MCF 10A (cell line): ENCODE measurements at regions of chr1 and their contacts with region 1.

Region 1: DNA sequence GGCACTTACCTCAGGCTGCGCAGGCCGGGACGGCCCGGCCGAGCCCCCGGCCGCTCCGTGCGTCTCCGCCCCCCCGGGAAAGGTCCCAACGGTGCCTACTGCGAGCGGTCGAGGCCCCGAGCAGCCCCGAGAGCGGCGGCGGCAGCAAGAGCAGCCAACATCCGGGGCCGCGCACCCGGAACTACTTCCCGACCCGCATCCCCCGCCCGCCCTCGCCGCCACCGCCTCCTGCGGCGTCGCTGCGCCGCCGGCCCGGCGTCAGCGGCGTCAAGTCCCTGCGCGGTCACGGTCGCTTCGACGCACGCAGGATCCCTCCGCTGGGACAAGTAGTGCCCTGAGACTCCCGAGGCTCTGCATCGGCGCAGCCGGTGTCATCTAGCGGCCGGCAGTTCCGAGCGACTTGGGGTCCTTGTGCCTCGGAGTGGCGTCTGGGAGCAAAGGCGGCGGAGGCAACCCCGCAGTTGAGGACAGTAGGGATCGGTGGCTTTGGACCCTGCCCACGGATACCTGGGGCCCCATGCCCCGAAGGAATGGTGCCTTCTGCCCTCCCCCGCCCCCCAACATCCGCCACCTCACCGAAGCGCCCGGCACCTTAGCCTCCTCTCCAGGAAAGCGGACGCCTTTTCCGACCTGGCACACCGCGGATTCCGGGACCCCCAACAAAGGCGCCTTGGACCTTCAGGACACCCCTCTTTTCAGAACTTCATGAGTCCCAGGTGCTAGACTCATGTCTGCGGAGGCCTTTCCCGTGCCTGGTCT is at the start of gene FOXJ3:
- DNase-seq: peak; percentile 92
- H3K4me3 Mint-ChIP-seq: peak within 1 kb of the TSS; percentile 79
- H3K27ac Mint-ChIP-seq: peak within 1 kb of the TSS; percentile 92
- H3K4me1 Mint-ChIP-seq: peaks cover 46% of the 10 kb centered on the region
- H3K27me3 Mint-ChIP-seq: no peaks in the 10 kb centered on the region
- CTCF ChIP-seq: no peak
- total RNA-seq, gene FOXJ3: 42.2 and 43.7 TPM in 2 replicates

Region 2: DNA sequence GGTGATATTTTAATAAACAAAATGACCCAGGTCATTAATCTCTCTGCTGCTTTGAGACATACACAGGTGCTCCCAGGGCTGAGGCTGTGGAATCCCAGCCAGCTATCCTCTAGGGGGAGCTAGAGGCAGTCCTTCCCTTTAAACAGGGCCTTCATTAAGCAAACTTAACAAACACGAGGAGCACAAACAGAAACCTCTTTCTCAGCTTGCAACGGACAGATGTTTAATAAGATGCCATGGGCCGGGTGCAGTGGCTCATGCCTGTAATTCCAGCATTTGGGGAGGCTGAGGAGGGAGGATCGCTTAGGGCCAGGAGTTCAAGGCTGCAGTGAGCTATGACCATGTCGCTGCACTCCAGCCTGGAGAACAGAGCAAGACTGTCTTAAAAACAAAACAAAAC is 523.2 kb before region 1 on chr1:
- CTCF ChIA-PET with region 1: no interaction called
- POLR2A ChIA-PET with region 1: no interaction called
- intact Hi-C with region 1: loop called (anchors 5 kb)
- DNase-seq: peak; percentile 79
- H3K4me3 Mint-ChIP-seq: no peak overlapping the region
- H3K27ac Mint-ChIP-seq: no peak overlapping the region
- H3K4me1 Mint-ChIP-seq: peaks cover 7% of the 10 kb centered on the region
- H3K27me3 Mint-ChIP-seq: no peaks in the 10 kb centered on the region
- CTCF ChIP-seq: peak; percentile 59

Region 3: DNA sequence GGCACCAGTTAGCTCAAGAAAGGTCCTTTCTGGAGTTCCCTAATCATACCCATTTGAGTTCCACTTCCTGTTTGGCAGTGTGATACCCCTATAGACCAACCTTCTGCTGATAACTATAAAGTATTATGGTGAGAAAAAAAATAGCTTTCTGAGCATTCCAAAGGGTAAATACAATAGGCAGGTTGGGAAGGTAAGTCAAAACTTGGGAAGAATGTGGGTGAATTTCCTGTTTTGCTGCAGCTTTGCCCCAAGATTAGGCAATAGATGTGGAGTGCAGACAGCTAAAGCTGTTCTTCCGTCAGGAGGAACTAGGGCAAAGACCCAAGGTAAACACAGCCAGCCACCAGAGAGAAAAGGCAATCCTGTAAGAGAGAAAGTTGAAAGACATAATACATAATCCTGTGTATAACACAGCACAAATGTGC is 120.8 kb before region 1 on chr1:
- CTCF ChIA-PET with region 1: interaction called, 7 read pairs
- POLR2A ChIA-PET with region 1: interaction called, 13 read pairs
- intact Hi-C with region 1: no loop called
- DNase-seq: peak; percentile 90
- H3K4me3 Mint-ChIP-seq: peak overlapping the region; percentile 28
- H3K27ac Mint-ChIP-seq: peak overlapping the region; percentile 20
- H3K4me1 Mint-ChIP-seq: peaks cover 33% of the 10 kb centered on the region
- H3K27me3 Mint-ChIP-seq: no peaks in the 10 kb centered on the region
- CTCF ChIP-seq: no peak

Region 4: GRCh38 chr1:42319128-42319851 is 15.9 kb before region 1 on chr1:
- CTCF ChIA-PET with region 1: interaction called, 6 read pairs
- POLR2A ChIA-PET with region 1: interaction called, 14 read pairs
- intact Hi-C with region 1: no loop called
- DNase-seq: peak; percentile 11
- H3K4me3 Mint-ChIP-seq: peak overlapping the region; percentile 3
- H3K27ac Mint-ChIP-seq: peak overlapping the region; percentile 63
- H3K4me1 Mint-ChIP-seq: peaks cover 65% of the 10 kb centered on the region
- H3K27me3 Mint-ChIP-seq: no peaks in the 10 kb centered on the region
- CTCF ChIP-seq: no peak

Region 5: GRCh38 chr1:42462828-42463763 is 127.9 kb after region 1 on chr1 and contains the start of gene CCDC30:
- CTCF ChIA-PET with region 1: no interaction called
- POLR2A ChIA-PET with region 1: interaction called, 8 read pairs
- intact Hi-C with region 1: loop called (anchors 2 kb)
- DNase-seq: peak; percentile 99
- H3K4me3 Mint-ChIP-seq: peak within 1 kb of the TSS; percentile 81
- H3K27ac Mint-ChIP-seq: peak within 1 kb of the TSS; percentile 89
- H3K4me1 Mint-ChIP-seq: peaks cover 11% of the 10 kb centered on the region
- H3K27me3 Mint-ChIP-seq: no peaks in the 10 kb centered on the region
- CTCF ChIP-seq: no peak
- total RNA-seq, gene CCDC30: 2.2 and 3.2 TPM in 2 replicates

Region 6: DNA sequence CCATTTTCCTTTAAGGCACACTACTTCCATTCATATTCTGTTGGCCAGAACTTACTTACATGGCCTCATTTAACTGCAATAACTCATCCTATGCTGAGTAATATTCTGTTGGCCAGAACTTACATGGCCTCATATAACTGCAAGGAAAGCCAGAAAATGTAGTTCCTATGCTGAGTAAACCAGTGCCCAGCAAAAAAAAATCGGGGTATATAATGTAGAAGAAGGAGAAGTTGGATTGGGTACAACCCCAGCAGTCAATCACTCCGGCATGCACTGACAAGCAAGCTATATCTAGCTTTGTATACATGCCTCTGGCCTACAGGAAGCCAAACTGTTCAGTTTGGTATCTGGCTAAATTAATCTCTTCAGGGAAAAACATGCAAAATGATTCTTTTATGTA is 283.6 kb after region 1 on chr1:
- CTCF ChIA-PET with region 1: no interaction called
- POLR2A ChIA-PET with region 1: no interaction called
- intact Hi-C with region 1: no loop called
- DNase-seq: no peak
- H3K4me3 Mint-ChIP-seq: no peak overlapping the region
- H3K27ac Mint-ChIP-seq: no peak overlapping the region
- H3K4me1 Mint-ChIP-seq: no peaks in the 10 kb centered on the region
- H3K27me3 Mint-ChIP-seq: peaks cover 7% of the 10 kb centered on the region
- CTCF ChIP-seq: no peak

Region 7: DNA sequence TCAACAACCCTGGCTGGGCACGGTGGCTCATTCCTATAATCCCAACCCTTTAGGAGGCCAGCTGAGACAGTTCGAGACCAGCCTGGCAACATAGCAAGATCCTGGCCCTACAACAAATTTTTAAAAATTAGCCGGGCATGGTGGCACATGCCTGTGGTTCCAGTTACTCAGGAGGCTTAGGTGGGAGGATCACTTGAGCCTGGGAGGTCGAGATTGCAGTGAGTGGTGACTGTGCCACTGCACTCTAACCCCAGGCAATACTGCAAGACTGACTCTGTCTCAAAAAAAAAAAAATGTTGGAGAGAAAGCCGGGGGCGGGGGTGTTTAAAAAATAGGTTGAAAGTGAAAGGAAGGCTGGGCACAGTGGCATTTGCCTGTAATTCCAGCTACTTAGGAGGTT is 388.3 kb after region 1 on chr1:
- CTCF ChIA-PET with region 1: no interaction called
- POLR2A ChIA-PET with region 1: no interaction called
- intact Hi-C with region 1: loop called (anchors 10 kb)
- DNase-seq: peak; percentile 21
- H3K4me3 Mint-ChIP-seq: no peak overlapping the region
- H3K27ac Mint-ChIP-seq: no peak overlapping the region
- H3K4me1 Mint-ChIP-seq: peaks cover 9% of the 10 kb centered on the region
- H3K27me3 Mint-ChIP-seq: no peaks in the 10 kb centered on the region
- CTCF ChIP-seq: no peak

Region 8: DNA sequence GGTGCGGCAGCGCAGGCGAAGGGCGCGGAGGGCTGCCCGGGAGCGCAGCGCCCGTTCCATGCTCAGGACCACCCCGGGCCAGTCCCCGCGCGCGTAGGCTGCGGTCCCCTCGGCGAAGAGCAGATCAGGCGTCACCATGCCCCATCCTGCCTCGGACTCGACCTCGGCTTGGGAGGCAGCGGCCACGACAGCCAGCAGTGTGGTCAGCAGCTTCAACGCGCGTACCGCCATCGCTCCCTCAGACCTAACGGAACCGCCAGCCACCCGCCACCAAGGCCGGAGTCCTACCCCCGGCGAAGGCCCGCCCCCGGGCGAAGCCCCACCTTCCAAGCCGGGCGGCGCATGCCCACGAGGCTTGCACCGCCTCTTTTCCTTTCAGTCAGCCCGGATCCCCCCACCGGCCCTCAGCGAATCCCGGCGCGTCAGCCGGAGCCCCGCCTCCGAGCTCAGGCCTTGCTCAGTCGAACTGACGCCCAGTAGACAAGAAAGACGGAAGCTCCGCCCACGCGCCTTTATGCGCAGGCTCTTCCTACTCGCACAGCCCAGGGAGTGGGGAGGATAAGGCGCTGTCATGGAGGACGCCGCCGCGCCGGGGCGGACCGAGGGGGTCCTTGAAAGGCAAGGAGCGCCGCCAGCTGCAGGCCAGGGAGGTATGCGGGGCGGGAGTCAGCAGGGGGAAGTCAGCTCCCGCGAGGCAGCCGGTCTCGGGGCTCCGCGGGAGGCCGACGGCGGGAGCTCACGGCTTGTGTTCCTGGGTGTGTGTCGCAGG is 431.7 kb after region 1 on chr1 and contains the starts of genes C1orf50 and P3H1:
- CTCF ChIA-PET with region 1: interaction called, 3 read pairs
- POLR2A ChIA-PET with region 1: interaction called, 15 read pairs
- intact Hi-C with region 1: no loop called
- DNase-seq: peak; percentile 99
- H3K4me3 Mint-ChIP-seq: no peak within 1 kb of the TSS
- H3K27ac Mint-ChIP-seq: no peak within 1 kb of the TSS
- H3K4me1 Mint-ChIP-seq: peaks cover 6% of the 10 kb centered on the region
- H3K27me3 Mint-ChIP-seq: no peaks in the 10 kb centered on the region
- CTCF ChIP-seq: no peak
- total RNA-seq, gene C1orf50: 11.7 and 13.8 TPM in 2 replicates
- total RNA-seq, gene P3H1: 36.1 and 57.2 TPM in 2 replicates